ENCODE measurements at regions of chr18 and their contacts with region 1.

Region 1: DNA sequence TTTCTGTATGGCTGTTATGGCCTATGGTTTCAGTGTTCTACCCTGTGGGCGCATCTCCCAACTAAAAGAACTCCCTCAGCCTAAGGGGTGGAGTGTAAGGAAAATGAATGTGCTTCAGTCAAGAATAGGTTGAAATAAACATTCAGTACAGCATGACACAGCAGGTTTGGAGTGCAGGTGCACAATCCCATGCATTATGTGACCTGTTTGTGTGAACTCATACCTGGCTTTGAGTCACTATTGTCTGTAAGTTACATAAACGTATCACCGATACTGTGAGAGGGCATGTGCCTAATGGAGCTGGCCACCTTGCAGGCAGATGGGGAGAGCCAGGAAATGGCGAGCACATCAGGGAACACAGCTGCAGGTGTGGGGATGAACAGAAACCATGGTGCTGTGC is 216.0 kb downstream of the DSEL start:
- DNase-seq: no peak
- ATAC-seq: no peak
- H3K4me3 ChIP-seq: no peak overlapping the region
- H3K27ac ChIP-seq: no peak overlapping the region
- H3K4me1 ChIP-seq: no peaks in the 10 kb centered on the region
- H3K27me3 ChIP-seq: no peaks in the 10 kb centered on the region
- CTCF ChIP-seq: no peak
- POLR2A ChIP-seq: no peak

Region 2: DNA sequence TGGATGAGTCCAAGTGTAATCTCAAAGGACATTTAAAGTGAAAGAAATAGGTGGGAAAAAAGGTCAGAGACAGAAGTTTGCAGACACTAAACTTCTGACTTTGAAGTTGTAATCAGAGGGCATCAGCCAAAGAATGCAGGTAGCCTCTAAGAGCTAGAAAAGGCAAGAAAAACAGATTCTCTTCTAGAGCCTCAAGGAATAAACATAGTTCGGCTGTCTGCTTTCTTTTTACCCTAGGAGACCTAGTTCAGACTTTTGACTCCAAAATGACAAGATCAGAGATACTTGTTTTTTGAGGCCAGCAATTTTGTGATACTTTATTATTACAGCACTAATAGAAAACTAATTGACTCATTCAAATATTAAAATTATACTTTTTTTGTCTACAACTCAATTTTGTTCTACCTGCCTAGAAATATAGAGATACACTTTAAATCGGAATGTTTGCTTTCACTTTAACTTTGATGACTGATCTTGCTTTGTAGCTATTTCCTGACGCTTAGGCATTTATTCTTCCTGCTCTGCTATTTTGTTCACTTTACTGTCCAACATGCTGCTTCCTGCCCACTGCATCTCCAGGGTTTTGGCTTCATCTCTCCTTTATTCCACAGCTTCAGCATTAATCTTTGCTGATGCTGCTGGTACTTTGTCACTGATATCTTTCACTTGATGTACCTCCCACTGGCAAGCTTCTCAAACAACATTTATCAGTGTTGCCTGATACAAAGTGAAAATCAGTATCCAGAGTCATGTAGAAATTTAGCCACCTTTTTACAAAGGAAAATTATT is 56.5 kb before region 1 on chr18:
- intact Hi-C with region 1: loop called in 1 of 10 experiments (anchors 5 kb)
- DNase-seq: no peak
- ATAC-seq: no peak
- H3K4me3 ChIP-seq: peak overlapping the region in 6 of 12 donors; percentile 5 to 45 (median 19)
- H3K27ac ChIP-seq: no peak overlapping the region
- H3K4me1 ChIP-seq: peaks cover 0 to 5% (median 0%) of the 10 kb centered on the region in 12 donors
- H3K27me3 ChIP-seq: no peaks in the 10 kb centered on the region
- CTCF ChIP-seq: no peak
- POLR2A ChIP-seq: no peak

Region 3: GRCh38 chr18:67290421-67290820 is 10.1 kb before region 1 on chr18:
- intact Hi-C with region 1: loop called in 1 of 10 experiments (anchors 1 kb)
- DNase-seq: no peak
- ATAC-seq: no peak
- H3K4me3 ChIP-seq: no peak overlapping the region
- H3K27ac ChIP-seq: no peak overlapping the region
- H3K4me1 ChIP-seq: no peaks in the 10 kb centered on the region
- H3K27me3 ChIP-seq: no peaks in the 10 kb centered on the region
- CTCF ChIP-seq: no peak
- POLR2A ChIP-seq: no peak

Region 4: GRCh38 chr18:68177807-68178702 is 877.6 kb after region 1 on chr18:
- intact Hi-C with region 1: no loop called
- DNase-seq: no peak
- ATAC-seq: no peak
- H3K4me3 ChIP-seq: no peak overlapping the region
- H3K27ac ChIP-seq: no peak overlapping the region
- H3K4me1 ChIP-seq: no peaks in the 10 kb centered on the region
- H3K27me3 ChIP-seq: no peaks in the 10 kb centered on the region
- CTCF ChIP-seq: no peak
- POLR2A ChIP-seq: no peak